ENCODE measurements at regions of chr19 and their contacts with region 1.

Region 1: DNA sequence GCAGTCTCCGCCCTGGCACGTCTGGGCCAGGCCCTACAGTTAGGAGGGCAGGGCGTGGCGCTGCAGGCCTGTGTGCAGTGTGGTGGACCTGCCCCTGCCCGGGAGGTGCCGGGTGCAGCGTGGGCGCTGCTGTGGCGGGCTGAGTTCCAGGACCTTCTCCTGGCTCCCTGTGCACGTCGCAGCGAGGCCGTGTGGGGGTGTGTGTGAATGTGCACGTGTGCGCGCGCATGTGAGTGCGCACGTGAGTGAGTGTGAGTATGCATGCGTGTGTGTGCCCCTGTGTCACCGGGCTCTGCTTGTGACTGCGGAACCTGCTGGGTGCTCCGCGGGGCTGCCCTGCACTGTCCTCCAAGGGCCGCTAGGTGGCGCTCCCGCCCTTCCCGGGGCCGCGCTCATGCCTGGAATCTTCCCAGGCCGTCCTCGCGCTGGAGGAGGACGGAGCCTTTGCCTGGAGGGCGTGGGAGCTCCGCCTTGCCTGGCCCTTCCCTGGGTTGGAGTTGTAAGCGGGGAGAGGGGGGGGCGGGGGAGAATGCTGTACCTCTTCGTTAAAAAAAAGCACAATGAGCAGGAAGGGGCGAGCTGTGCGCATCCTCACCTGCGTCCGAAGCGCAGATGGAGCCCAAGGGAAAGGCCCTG is 79.3 kb downstream of the KDM4B start:
- DNase-seq: no peak

Region 2: DNA sequence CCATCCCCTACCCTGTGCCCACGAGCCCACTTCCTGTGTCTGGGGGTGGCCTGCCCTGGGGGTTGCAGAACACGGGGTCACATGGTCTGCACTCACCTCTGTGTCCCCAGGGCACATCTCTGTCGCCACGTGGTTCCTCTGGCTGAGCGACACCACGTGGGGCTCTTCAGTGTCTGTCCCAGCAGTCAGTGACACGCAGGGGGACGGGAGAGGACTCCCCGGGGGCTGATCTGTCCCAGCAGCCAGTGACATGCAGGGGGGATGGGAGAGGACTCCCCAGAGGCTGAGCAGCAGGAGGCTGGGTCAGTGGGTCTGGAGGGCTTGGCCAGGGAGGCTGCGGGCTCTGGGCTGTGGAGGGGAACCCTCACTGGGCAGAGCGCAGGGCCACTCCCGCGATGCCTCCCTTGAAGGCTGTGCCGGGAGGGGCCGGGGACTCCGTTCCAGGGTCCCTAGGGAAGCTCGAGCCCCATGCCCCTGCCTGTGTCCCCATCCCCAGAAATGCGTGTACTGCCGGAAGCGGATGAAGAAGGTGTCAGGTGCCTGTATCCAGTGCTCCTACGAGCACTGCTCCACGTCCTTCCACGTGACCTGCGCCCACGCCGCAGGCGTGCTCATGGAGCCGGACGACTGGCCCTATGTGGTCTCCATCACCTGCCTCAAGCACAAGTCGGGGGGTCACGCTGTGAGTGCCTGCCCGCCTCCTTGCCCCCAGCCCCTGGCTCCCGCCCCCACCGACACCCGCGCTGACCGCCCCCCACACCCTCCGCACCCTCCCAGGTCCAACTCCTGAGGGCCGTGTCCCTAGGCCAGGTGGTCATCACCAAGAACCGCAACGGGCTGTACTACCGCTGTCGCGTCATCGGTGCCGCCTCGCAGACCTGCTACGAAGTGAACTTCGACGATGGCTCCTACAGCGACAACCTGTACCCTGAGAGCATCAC is 95.5 kb after region 1 on chr19:
- intact Hi-C with region 1: loop called (anchors 5 kb)
- DNase-seq: no peak

Region 3: DNA sequence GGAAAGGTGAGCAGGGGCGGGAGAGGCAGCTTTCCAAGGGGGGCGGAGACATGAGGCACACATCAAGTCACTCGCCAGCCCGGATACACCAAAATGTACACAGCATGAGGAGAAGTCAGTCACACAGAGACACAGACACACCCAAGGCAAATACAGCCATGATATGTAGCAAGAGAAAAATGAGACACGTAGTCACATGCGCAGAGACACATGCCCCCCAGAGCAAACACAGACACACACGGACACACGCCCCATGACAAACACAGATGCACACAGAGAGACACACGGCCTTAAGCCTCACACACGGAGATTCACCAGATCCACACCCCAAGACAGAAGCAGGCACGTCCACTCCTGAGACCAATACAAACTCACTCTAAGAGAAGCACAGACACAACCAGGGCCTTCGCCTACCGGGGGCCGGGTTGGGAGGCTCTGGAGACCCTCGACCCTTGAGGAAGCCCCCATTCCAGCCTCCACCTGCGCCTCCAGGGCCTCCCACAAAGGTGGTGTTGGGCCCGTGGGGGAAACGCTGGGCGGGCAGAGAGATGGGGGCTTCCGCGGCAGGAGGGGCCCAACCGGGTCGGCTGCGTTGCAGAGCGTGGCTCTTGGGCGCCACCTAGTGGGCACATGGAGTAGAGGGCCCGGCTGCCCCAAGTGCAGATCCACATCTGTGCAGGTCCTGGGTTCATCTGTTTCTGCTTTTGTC is 529.7 kb after region 1 on chr19:
- intact Hi-C with region 1: loop called (anchors 5 kb)
- DNase-seq: peak; percentile 87

Measured in cardiac septum (tissue), 1 donor.